ENCODE measurements at regions of chr6 and their contacts with region 1.

Region 1: DNA sequence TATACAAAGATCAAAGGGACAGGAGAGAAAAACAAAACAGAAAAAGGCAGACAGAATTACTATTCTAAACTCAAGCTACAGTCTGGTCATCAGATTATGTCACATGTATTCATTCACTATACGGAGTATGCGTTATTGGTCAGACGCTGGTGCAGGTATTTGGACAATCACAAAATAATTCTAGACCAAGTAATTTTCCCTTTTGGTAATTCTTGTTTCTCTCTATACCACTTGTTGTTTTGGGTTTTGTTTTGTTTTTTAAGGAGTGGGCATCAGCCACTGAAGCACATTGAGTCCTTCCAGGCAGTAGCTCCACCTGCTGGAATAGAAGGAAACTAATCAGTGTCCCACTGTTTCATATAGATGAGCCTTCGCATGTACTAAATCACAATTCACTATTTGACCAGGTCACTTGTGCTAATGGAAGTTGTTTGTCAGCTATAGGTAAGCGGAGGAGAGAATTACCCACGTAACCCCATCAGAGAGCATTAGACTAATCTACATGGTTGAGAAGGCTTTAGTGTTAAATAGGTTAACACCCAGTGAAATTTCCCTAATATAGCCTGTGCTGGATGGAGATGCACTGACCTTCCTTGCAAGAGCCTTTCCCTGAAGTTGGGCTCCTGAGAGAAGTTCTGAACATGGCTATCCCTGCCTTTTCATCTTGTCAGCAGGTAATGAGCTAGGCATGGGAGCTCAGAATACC is 77.9 kb downstream of the TNFAIP3 start:
- DNase-seq: no peak
- ATAC-seq: peak; percentile 69

Region 2: DNA sequence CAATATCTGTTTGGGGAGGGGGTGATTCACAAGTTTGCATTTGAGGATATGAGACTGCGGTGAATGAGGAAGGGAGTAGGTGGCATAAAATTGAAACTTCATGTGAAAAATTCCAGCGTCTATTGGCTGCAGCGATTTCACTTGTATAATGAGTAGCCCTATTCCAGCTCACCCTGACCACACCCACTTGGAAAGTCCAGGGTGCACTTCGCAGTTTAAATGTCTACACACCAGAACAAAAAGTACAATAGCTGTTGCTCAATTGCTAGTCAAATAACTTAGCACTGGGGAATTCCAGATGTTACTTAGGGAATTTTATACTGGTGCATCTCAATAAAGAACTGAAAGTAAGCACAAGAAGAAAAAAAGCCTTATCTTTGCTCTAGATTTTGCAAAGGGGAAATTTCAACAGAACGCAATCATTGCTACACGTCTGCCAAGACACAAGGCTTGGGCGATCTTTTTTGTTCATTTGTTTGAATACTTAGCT is 71.6 kb before region 1 on chr6:
- intact Hi-C with region 1: loop called in 1 of 2 experiments (anchors 10 kb)
- DNase-seq: peak; percentile 73 to 94
- ATAC-seq: peak; percentile 93

Region 3: DNA sequence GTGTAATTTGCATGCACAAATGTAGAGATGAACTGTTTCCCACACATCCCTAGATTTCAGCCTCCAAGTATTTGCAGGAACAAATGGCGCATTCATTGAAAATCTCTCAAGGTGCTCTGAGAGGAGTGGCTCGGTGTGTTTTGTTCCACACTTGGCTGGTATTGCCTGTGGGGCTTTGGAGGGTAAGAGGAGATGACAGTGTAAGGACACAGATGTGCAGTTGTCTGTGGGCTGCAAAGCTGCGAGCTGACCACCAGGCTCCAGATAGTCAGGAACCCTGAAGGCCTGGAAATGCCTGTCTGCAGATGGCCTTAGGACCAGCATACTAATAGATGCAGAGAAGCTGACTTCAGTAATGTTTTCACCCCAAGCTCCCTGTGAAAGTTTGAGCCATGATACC is 331.0 kb after region 1 on chr6:
- intact Hi-C with region 1: no loop called
- DNase-seq: no peak
- ATAC-seq: no peak

Region 4: DNA sequence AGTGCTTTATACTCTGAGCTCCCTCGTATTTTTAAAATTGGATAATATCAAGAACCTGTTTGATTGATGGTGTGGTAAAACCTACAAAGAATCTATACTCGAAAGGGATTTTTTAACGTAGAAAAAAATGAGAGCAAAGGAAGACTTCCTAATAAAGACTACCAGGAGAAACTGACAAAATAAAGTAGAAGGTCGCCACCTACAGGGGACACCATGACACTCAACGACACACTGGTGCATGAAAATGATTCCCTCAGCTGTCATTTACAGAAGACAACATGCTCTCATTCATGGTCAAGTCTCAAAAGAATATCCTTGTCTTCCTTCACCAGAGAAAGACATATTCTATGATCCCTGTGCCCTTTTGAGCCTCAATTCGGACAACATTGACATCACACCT is 564.4 kb after region 1 on chr6:
- intact Hi-C with region 1: no loop called
- DNase-seq: peak in 1 of 2 donors; percentile 78
- ATAC-seq: peak; percentile 49